ENCODE measurements at regions of chr11 and their contacts with region 1.

Region 1: DNA sequence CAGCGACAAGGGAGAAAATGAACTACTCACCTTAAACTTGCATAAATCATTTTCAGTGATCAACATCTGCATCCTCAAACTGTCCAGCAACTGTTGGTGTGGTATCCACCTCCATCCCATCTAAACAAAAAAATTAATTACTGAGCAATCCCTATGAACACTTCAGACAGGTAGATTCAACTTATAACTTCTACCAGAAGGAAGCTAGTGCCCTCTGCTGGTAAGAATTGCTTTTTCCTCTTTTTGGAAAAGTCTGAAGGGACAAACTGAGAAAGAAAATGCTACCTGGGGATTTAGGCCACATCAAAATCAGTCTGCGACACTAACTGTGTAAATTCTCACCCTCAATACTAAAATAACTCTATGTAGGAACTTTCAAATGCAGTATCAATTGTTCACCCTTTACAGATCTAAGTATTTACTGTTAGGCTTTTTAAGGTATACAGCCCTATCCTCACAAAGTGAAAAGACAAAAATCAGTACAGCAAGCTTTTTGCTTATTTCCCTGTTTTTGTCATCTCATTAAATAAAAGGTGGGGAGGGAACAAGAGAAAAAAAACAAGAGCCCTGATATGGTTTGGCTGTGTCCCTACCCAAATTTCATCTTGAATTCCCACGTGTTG is 17.9 kb downstream of the CLNS1A start:
- DNase-seq: no peak
- ATAC-seq: peak in 1 of 2 donors; percentile 30
- H3K4me3 ChIP-seq: no peak overlapping the region
- H3K27ac ChIP-seq: no peak overlapping the region
- H3K4me1 ChIP-seq: no peaks in the 10 kb centered on the region
- H3K27me3 ChIP-seq: no peaks in the 10 kb centered on the region
- CTCF ChIP-seq: peak in 4 of 5 experiments; percentile 24 to 66 (median 49)
- POLR2A ChIP-seq: no peak

Region 2: DNA sequence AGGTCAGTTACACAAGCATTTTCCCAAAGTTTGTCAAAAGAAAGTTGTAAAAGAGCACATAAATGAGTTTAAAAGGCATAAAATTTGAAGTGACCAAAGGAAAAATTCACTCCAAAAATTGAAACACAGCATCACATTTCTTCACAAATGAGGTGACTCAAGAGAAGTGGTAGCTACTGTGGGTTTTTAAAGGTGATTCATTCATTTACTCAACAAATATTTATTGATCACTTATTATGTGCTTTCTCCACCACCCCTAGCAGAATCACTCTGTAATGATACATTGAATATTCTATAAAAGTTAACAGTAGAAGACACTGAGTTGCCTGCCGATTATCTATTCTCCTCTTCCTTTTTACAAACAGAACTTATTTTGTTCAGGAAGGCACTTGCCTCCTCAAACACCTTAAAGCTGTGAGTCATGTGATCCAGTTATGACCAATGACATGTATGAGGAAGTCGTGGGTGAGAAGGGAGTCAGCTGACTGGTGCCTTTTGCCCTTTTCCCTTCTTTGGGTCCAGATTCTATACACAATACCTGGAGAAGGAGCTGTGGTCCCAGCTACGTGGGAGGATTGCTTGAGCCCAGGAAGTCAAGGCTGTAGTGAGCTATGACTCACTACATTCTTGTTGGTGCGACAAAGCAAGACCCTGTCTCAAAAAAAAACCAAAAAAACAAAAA is 85.6 kb after region 1 on chr11:
- in situ Hi-C with region 1: loop called in 1 of 4 experiments (anchors 25 kb)
- intact Hi-C with region 1: no loop called
- DNase-seq: no peak
- ATAC-seq: no peak
- H3K4me3 ChIP-seq: no peak overlapping the region
- H3K27ac ChIP-seq: no peak overlapping the region
- H3K4me1 ChIP-seq: peaks cover 0 to 4% of the 10 kb centered on the region in 2 donors
- H3K27me3 ChIP-seq: no peaks in the 10 kb centered on the region
- CTCF ChIP-seq: no peak
- POLR2A ChIP-seq: no peak